AG04449 (cell line): ENCODE measurements at regions of chr17 and their contacts with region 1.

Region 1: GRCh38 chr17:34354637-34355036 is 1.6 kb upstream of the CCL13 start:
- DNase-seq: peak; percentile 5
- H3K4me3 ChIP-seq: no peak overlapping the region
- CTCF ChIP-seq: no peak

Region 2: DNA sequence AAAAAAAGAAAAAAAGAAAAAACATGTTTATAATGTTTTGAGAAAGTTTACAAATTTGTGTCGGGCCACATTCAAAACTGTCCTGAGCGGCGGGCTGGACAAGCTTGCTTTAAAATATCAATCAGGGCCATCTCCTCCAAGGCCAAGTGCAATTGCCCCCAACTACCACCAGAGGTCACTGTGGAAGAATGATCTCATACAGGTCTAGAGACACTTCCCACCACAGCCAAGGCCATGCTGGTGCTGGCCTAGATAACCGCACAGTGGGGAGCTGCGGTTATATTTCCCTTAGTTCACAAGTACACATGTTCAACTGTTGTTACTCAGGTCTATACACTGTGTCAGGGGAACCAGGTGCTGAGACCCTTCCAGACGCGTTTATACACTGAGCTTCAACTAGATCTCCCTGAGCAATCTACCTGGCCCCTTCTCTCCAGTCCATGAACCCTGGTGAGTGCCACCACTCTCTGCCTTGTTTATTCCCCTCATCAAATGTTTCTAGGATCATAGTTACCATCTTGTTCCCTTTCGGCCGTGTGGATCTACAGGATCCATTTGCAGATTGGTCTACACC is 183.3 kb before region 1 on chr17:
- CTCF ChIA-PET with region 1: interaction called, 153 read pairs
- POLR2A ChIA-PET with region 1: no interaction called
- DNase-seq: no peak
- H3K4me3 ChIP-seq: no peak overlapping the region
- CTCF ChIP-seq: peak; percentile 80